ENCODE measurements at regions of chr15 and their contacts with region 1.

Region 1: GRCh38 chr15:75058127-75058905 is 34.9 kb downstream of the PPCDC start:
- DNase-seq: no peak
- H3K4me3 Mint-ChIP-seq: no peak overlapping the region
- H3K27ac Mint-ChIP-seq: no peak overlapping the region
- H3K4me1 Mint-ChIP-seq: peaks cover 5% of the 10 kb centered on the region
- H3K27me3 Mint-ChIP-seq: no peaks in the 10 kb centered on the region

Region 2: DNA sequence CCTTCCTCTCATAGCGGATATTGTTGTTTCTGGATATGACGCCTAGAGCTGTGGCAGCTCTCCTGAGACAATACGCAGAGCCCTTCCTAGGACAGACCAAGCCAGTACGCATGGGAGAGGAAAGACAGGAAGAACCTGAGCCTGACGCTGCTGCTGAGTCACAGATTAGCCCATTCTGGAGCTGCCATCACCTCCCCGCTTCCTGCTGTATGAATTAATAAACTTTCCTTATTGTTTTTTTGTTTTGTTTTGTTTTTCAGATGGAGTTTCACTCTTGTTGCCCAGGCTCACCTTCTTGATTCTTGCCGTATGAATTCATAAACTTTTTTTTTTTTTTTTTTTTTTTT is 32.0 kb after region 1 on chr15:
- CTCF ChIA-PET with region 1: no interaction called
- POLR2A ChIA-PET with region 1: no interaction called
- intact Hi-C with region 1: loop called (anchors 5 kb)
- DNase-seq: no peak
- H3K4me3 Mint-ChIP-seq: no peak overlapping the region
- H3K27ac Mint-ChIP-seq: no peak overlapping the region
- H3K4me1 Mint-ChIP-seq: peaks cover 16% of the 10 kb centered on the region
- H3K27me3 Mint-ChIP-seq: peaks cover 13% of the 10 kb centered on the region

Region 3: GRCh38 chr15:75431682-75432081 is 373.4 kb after region 1 on chr15:
- CTCF ChIA-PET with region 1: no interaction called
- POLR2A ChIA-PET with region 1: no interaction called
- intact Hi-C with region 1: no loop called
- DNase-seq: no peak
- H3K4me3 Mint-ChIP-seq: no peak overlapping the region
- H3K27ac Mint-ChIP-seq: peak overlapping the region; percentile 2
- H3K4me1 Mint-ChIP-seq: peaks cover 32% of the 10 kb centered on the region
- H3K27me3 Mint-ChIP-seq: no peaks in the 10 kb centered on the region

Region 4: GRCh38 chr15:75554717-75555116 is 496.4 kb after region 1 on chr15:
- CTCF ChIA-PET with region 1: no interaction called
- POLR2A ChIA-PET with region 1: no interaction called
- intact Hi-C with region 1: no loop called
- DNase-seq: no peak
- H3K4me3 Mint-ChIP-seq: no peak overlapping the region
- H3K27ac Mint-ChIP-seq: no peak overlapping the region
- H3K4me1 Mint-ChIP-seq: peaks cover 3% of the 10 kb centered on the region
- H3K27me3 Mint-ChIP-seq: no peaks in the 10 kb centered on the region